Heart left ventricle (tissue), 16 donors: ENCODE measurements at regions of chr7 and their contacts with region 1.

Region 1: GRCh38 chr7:35707422-35707821 is 12.5 kb upstream of the HERPUD2 start:
- DNase-seq: no peak
- ATAC-seq: no peak
- H3K4me3 ChIP-seq: no peak overlapping the region
- H3K27ac ChIP-seq: no peak overlapping the region
- H3K4me1 ChIP-seq: peaks cover 0 to 10% (median 0%) of the 10 kb centered on the region in 12 donors
- H3K27me3 ChIP-seq: no peaks in the 10 kb centered on the region
- CTCF ChIP-seq: no peak
- POLR2A ChIP-seq: no peak

Region 2: DNA sequence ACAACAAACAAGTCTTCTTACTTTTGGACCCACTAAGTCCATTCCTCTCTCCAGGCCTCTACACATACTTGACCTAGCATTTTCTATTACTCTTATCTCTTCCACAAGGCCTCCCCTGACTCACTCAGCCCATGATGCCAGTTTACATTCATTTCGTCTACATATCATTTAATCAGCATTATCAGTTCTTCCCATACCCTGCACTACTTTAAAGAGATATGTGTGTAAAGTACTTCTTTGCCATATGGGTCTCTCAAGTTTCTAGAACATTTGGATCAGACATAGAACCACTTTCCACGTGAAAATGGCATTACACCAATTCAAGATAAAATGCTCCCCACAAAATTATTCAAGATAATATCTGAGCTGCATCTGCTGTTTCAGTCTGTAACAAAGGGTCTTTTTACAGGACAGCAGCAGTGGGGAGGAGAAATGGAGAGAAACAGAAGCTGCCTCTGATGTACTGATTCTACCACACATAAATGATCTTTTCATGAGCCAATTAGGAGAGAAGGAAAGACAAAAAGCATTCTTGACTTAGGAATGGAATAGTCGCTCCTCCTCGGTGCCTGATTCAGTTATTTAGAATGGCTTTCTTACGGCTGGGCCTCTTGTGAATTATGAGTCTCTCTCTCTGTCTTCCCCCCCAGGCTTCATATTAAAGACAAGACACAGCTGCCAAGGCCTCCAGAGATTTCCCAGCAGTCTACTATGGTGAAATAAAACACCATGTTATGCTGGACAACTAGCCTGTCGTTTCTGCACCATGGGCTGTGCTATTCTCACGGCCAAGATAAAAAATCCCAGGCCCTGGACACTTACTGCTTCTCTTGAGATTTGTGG is 46.6 kb after region 1 on chr7:
- intact Hi-C with region 1: no loop called
- DNase-seq: peak; percentile 61 to 78 (median 68)
- ATAC-seq: peak; percentile 67 to 88 (median 82)
- H3K4me3 ChIP-seq: no peak overlapping the region
- H3K27ac ChIP-seq: peak overlapping the region; percentile 6 to 75 (median 50)
- H3K4me1 ChIP-seq: peaks cover 0 to 58% (median 18%) of the 10 kb centered on the region in 12 donors
- H3K27me3 ChIP-seq: no peaks in the 10 kb centered on the region
- CTCF ChIP-seq: no peak
- POLR2A ChIP-seq: no peak

Region 3: GRCh38 chr7:35866186-35866585 is 158.8 kb after region 1 on chr7:
- intact Hi-C with region 1: no loop called
- DNase-seq: no peak
- ATAC-seq: no peak
- H3K4me3 ChIP-seq: no peak overlapping the region
- H3K27ac ChIP-seq: no peak overlapping the region
- H3K4me1 ChIP-seq: peaks cover 0 to 31% (median 11%) of the 10 kb centered on the region in 12 donors
- H3K27me3 ChIP-seq: no peaks in the 10 kb centered on the region
- CTCF ChIP-seq: no peak
- POLR2A ChIP-seq: no peak

Region 4: GRCh38 chr7:35889001-35889400 is 181.6 kb after region 1 on chr7:
- intact Hi-C with region 1: loop called in 1 of 10 experiments (anchors 5 kb)
- DNase-seq: no peak
- ATAC-seq: no peak
- H3K4me3 ChIP-seq: no peak overlapping the region
- H3K27ac ChIP-seq: no peak overlapping the region
- H3K4me1 ChIP-seq: peaks cover 0 to 8% (median 0%) of the 10 kb centered on the region in 12 donors
- H3K27me3 ChIP-seq: no peaks in the 10 kb centered on the region
- CTCF ChIP-seq: no peak
- POLR2A ChIP-seq: no peak

Region 5: DNA sequence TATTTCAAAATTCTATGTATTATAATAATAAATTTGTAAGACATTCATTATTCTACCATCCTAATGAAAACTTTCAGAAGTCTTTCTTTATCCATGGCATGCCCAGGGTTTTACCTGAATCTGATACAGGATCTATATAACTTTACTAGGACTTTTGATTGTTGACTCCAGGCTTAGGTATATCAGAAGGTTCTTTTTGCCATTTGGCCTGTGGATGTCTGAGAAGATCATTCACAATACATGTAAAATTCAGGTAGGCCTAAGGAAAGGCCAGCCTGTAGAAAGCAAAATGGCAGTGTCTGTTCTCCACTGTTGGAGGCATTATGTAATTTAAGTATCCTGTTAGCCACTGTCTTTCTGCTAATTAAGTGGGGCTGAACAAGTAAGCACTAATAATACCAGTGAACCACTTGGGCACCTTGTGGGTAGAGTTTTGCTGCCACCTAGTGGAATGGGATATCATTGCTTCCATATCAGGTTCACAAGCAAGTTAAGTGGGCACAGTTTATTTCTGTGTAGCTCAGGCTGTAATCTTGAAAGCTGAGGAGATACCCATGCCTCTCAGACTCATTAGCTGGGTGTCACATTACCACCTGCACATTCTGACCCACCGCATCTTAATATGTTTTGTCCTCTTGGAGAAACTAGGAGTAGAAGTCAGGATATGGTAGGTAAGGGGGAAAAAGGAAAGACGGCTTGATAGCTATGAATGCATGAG is 198.9 kb after region 1 on chr7:
- intact Hi-C with region 1: loop called (anchors 1 to 5 kb)
- DNase-seq: peak in 4 of 5 donors; percentile 31 to 61 (median 48)
- ATAC-seq: peak; percentile 72 to 91 (median 88)
- H3K4me3 ChIP-seq: no peak overlapping the region
- H3K27ac ChIP-seq: no peak overlapping the region
- H3K4me1 ChIP-seq: peaks cover 0 to 21% (median 5%) of the 10 kb centered on the region in 12 donors
- H3K27me3 ChIP-seq: no peaks in the 10 kb centered on the region
- CTCF ChIP-seq: peak; percentile 83 to 97 (median 94)
- POLR2A ChIP-seq: no peak

Region 6: DNA sequence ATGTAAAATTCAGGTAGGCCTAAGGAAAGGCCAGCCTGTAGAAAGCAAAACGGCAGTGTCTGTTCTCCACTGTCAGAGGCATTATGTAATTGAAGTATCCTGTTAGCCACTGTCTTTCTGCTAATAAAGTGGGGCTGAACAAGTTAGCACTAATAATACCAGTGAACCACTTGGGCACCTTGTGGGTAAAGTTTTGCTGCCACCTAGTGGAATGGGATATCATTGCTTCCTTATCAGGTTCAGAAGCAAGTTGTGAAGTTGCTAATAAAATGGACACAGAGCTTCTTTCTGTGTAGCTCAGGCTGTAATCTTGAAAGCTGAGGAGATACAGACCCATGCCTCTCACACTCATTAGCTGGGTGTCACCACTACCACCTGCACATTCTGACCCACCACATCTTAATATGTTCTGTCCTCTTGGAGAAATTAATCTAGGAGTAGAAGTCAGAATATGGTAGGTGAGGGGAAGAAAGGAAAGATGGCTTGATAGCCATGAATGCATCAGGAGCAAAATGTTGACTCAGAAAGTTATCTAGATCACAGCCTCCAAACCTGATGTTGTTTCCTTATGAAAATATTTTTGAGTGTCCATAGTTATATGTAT is 268.5 kb after region 1 on chr7:
- intact Hi-C with region 1: loop called in 3 of 10 experiments (anchors 5 to 10 kb)
- DNase-seq: peak in 1 of 5 donors; percentile 33
- ATAC-seq: peak; percentile 69 to 87 (median 82)
- H3K4me3 ChIP-seq: no peak overlapping the region
- H3K27ac ChIP-seq: no peak overlapping the region
- H3K4me1 ChIP-seq: peaks cover 0 to 7% (median 0%) of the 10 kb centered on the region in 12 donors
- H3K27me3 ChIP-seq: peaks cover 0 to 19% (median 0%) of the 10 kb centered on the region in 9 donors
- CTCF ChIP-seq: peak; percentile 80 to 88 (median 84)
- POLR2A ChIP-seq: no peak